ENCODE measurements at regions of chr16 and their contacts with region 1.

Region 1: GRCh38 chr16:27020031-27020430 is 46.7 kb upstream of the C16orf82 start:
- DNase-seq: no peak
- ATAC-seq: no peak
- H3K4me3 ChIP-seq: no peak overlapping the region
- H3K27ac ChIP-seq: no peak overlapping the region
- H3K4me1 ChIP-seq: no peaks in the 10 kb centered on the region
- H3K27me3 ChIP-seq: no peaks in the 10 kb centered on the region; a peak in 3 of 5 replicates
- CTCF ChIP-seq: no peak
- EP300 ChIP-seq: no peak
- POLR2A ChIP-seq: no peak
- RAD21 ChIP-seq: no peak

Region 2: DNA sequence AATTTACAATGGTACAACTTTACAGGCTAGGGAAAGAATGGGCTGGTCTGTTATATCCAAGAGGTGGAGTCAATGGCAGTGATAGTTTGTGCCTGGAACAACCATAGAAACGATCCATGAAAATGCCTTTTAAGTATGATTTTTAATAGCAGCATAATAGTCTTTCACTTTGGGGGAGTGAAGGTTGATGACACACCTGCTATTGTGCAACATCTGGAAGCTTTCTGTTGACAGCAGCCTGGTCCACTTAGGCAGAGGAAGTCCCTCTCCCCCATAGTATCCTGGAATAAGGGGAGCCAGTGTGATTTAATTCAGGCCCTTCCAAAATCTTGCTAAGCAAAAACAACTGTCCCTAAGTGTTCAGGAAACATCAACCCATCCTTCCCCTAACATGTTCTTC is 1384.6 kb before region 1 on chr16:
- CTCF ChIA-PET with region 1: no interaction called
- POLR2A ChIA-PET with region 1: no interaction called
- in situ Hi-C with region 1: no loop called
- intact Hi-C with region 1: loop called (anchors 5 kb)
- DNase-seq: no peak
- ATAC-seq: no peak
- H3K4me3 ChIP-seq: no peak overlapping the region
- H3K27ac ChIP-seq: no peak overlapping the region
- H3K4me1 ChIP-seq: no peaks in the 10 kb centered on the region
- H3K27me3 ChIP-seq: peaks cover 0 to 1% of the 10 kb centered on the region in 2 experiments; a peak in 1 of 5 replicates
- CTCF ChIP-seq: no peak
- EP300 ChIP-seq: no peak
- POLR2A ChIP-seq: no peak
- RAD21 ChIP-seq: no peak

Region 3: GRCh38 chr16:27355610-27356009 is 335.6 kb after region 1 on chr16:
- CTCF ChIA-PET with region 1: no interaction called
- POLR2A ChIA-PET with region 1: no interaction called
- in situ Hi-C with region 1: no loop called
- intact Hi-C with region 1: no loop called
- DNase-seq: peak; percentile 51
- ATAC-seq: peak; percentile 85
- H3K4me3 ChIP-seq: no peak overlapping the region
- H3K27ac ChIP-seq: no peak overlapping the region
- H3K4me1 ChIP-seq: no peaks in the 10 kb centered on the region
- H3K27me3 ChIP-seq: no peaks in the 10 kb centered on the region
- CTCF ChIP-seq: peak; percentile 69
- EP300 ChIP-seq: no peak
- POLR2A ChIP-seq: no peak
- RAD21 ChIP-seq: peak; percentile 75

Region 4: DNA sequence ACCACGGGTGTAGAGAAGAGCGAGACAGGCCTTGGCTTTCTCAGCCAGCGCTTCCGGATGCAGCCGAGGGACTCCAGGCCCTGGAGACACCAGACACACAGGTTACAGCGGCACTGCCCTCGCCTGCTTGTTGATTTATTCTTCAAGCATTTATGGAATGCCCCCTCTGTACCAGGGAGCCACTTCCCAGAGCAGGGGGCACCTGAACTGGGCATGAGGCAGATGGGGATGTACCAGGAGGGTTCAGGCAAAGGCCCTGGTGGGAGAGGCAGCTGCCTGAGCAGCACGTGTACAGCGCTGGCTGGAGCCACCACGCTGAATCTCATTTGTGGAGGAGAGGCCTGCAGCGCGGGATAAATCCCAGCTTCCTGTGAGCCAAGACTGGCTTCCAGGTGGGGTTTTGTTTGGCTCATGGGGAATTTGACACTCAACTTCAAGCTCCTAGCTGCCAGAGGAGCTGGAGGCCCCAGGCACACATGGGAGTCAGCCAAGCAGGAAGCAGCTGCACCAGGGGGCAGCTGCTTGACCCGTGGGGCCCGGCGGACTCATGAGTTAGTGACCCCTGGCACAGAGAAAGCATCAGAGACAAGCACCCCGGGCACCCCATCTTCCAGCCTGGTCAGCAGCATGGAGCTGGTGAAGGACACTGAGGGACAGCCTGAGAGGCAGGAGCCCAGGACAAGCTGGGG is 441.6 kb after region 1 on chr16:
- CTCF ChIA-PET with region 1: no interaction called
- POLR2A ChIA-PET with region 1: no interaction called
- in situ Hi-C with region 1: no loop called
- intact Hi-C with region 1: no loop called
- DNase-seq: no peak
- ATAC-seq: no peak
- H3K4me3 ChIP-seq: no peak overlapping the region
- H3K27ac ChIP-seq: no peak overlapping the region
- H3K4me1 ChIP-seq: no peaks in the 10 kb centered on the region
- H3K27me3 ChIP-seq: no peaks in the 10 kb centered on the region
- CTCF ChIP-seq: no peak
- EP300 ChIP-seq: no peak
- POLR2A ChIP-seq: no peak
- RAD21 ChIP-seq: no peak